ENCODE measurements at regions of chr13 and their contacts with region 1.

Region 1: DNA sequence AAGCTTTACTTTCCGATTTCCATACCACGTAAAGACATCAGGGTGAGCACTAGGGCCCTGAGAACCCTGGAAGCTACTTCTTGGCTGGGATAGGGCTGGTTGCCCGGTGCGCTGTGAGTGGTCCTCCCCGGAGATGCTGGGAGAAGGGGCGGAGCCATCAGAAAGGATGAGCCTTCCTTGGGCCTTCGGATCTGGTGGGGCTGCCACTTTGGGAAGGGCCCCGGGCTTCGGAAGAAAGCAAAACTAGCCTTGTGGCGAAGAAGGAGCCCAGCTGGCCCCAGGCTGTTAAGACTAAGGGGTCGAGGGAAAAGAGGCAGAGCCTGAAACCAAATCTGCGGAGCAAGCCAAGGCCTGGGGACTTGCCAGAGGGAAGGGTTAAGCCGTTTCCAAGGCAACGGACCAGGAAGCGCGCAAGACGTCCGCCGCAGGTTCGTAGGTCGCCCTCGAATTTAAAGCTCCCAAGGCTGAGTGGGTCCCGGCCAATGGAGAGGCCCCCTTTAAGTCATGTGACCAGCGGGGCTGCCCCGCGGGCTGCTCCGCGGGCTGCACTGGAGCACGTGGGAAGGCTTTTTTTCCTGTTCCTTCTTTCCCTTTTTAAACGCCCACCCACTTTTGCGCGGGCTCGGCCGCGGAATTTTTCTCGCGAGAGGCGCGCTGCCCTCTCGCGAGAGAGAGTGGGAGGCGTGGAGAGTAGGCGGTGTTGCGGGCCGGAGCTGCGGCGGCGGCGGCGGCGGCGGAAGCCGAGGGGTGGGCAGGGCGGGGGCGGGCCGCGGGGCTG is 426 bp upstream of the AKAP11 start:
- DNase-seq: peak; percentile 87 to 96 (median 93)
- ATAC-seq: peak; percentile 93
- H3K4me3 ChIP-seq: peak overlapping the region; percentile 84
- H3K4me3 Mint-ChIP-seq: peak overlapping the region in 9 of 10 donors; percentile 84 to 98 (median 97)
- H3K27ac ChIP-seq: peak overlapping the region; percentile 93
- H3K27ac Mint-ChIP-seq: peak overlapping the region; percentile 75 to 98 (median 96)
- H3K4me1 ChIP-seq: peaks cover 21 to 22% of the 10 kb centered on the region in 2 donors
- H3K4me1 Mint-ChIP-seq: peaks cover 16 to 55% (median 47%) of the 10 kb centered on the region in 7 donors
- H3K27me3 ChIP-seq: no peaks in the 10 kb centered on the region
- H3K27me3 Mint-ChIP-seq: peaks cover 0 to 5% (median 0%) of the 10 kb centered on the region in 5 donors

Region 2: GRCh38 chr13:41132512-41133152 is 1138.9 kb before region 1 on chr13 and contains the start of gene KBTBD6:
- CTCF ChIA-PET with region 1: no interaction called
- POLR2A ChIA-PET with region 1: no interaction called
- intact Hi-C with region 1: loop called (anchors 1 to 2 kb)
- DNase-seq: peak; percentile 76 to 93 (median 87)
- ATAC-seq: peak; percentile 98
- H3K4me3 ChIP-seq: peak within 1 kb of the TSS; percentile 77
- H3K4me3 Mint-ChIP-seq: peak within 1 kb of the TSS; percentile 94 to 99 (median 98)
- H3K27ac ChIP-seq: peak within 1 kb of the TSS; percentile 67
- H3K27ac Mint-ChIP-seq: peak within 1 kb of the TSS; percentile 91 to 97 (median 93)
- H3K4me1 ChIP-seq: peaks cover 15 to 24% of the 10 kb centered on the region in 2 donors
- H3K4me1 Mint-ChIP-seq: peaks cover 32 to 60% (median 54%) of the 10 kb centered on the region in 7 donors
- H3K27me3 ChIP-seq: no peaks in the 10 kb centered on the region
- H3K27me3 Mint-ChIP-seq: no peaks in the 10 kb centered on the region
- total RNA-seq, gene KBTBD6: 3.9 to 9.2 (median 7.7) TPM

Region 3: DNA sequence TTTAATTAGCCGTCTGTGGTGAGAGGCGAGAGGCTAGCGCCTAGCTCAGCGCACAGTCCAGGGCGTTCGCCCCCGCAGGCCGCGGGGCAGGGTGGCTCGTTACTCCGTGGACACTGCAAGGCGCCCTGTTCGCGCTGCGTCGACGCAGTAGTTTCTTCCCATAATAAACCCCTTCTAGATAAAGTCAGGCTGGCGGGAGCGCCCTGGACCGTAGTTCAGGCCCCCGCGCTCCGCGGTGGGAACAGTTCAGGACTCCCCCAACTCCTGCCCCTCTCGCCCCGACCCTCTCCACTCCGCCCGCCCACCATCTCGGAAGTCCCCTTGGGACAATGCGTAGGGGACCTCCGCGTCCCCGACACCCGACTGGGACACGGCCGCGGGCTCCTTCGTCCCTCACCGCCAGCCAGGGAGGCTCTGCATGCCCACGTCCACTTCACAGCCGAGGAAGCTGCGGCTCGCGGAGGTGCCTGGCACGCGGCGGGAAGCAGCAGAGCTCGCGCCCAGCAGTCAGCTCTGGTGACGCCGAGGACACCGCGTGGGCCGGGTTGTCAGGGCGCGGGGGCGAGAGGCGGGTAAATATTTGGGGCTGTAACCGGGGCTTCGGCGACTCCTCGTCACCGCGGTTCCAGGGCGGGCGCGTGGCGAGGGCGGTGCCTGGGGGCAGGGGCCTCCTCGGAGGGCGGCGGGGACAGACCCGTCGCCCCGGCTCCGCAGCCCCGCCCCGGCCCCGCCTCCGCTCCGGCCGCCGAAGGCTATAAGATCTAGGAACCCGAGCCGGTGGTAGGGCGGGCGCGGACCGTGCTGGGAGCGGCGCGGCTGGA is 814.5 kb before region 1 on chr13 and contains the start of gene RGCC:
- CTCF ChIA-PET with region 1: no interaction called
- POLR2A ChIA-PET with region 1: no interaction called
- intact Hi-C with region 1: loop called in 1 of 2 experiments (anchors 5 kb)
- DNase-seq: peak; percentile 89 to 98 (median 94)
- ATAC-seq: peak; percentile 90
- H3K4me3 ChIP-seq: peak within 1 kb of the TSS; percentile 84
- H3K4me3 Mint-ChIP-seq: peak within 1 kb of the TSS; percentile 91 to 98 (median 96)
- H3K27ac ChIP-seq: peak within 1 kb of the TSS; percentile 97
- H3K27ac Mint-ChIP-seq: peak within 1 kb of the TSS; percentile 93 to 99 (median 98)
- H3K4me1 ChIP-seq: peaks cover 22 to 37% of the 10 kb centered on the region in 2 donors
- H3K4me1 Mint-ChIP-seq: peaks cover 28 to 47% (median 38%) of the 10 kb centered on the region in 7 donors
- H3K27me3 ChIP-seq: no peaks in the 10 kb centered on the region
- H3K27me3 Mint-ChIP-seq: peaks cover 0 to 26% (median 0%) of the 10 kb centered on the region in 5 donors
- total RNA-seq, gene RGCC: 45.9 to 402 (median 197) TPM

Region 4: GRCh38 chr13:42039946-42040729 is 231.4 kb before region 1 on chr13:
- CTCF ChIA-PET with region 1: no interaction called
- POLR2A ChIA-PET with region 1: no interaction called
- intact Hi-C with region 1: loop called (anchors 2 to 5 kb)
- DNase-seq: peak; percentile 67 to 87 (median 79)
- ATAC-seq: peak; percentile 92
- H3K4me3 ChIP-seq: peak overlapping the region; percentile 70
- H3K4me3 Mint-ChIP-seq: peak overlapping the region; percentile 83 to 95 (median 90)
- H3K27ac ChIP-seq: peak overlapping the region; percentile 73
- H3K27ac Mint-ChIP-seq: peak overlapping the region; percentile 29 to 91 (median 84)
- H3K4me1 ChIP-seq: peaks cover 7 to 8% of the 10 kb centered on the region in 2 donors
- H3K4me1 Mint-ChIP-seq: peaks cover 7 to 22% (median 20%) of the 10 kb centered on the region in 7 donors
- H3K27me3 ChIP-seq: no peaks in the 10 kb centered on the region
- H3K27me3 Mint-ChIP-seq: peaks cover 0 to 58% (median 0%) of the 10 kb centered on the region in 5 donors

Region 5: DNA sequence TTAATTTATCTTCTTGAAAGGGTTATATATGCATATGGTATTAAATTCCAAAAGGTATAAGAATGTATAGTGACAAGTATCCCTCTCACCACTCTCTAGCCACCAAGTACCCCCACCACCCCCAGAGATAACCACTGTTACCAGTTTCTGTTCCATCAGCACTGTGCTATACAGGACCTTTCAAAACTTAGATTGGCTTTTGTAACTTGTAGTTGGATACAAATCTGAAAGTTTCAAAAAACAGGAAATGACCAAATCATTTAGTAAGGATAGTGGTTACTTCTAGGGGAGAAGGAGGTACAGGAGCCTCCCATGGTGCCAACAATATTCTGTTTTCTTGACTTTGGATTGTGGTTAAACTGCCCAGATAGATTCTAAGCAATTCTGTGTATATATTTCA is 57.1 kb after region 1 on chr13:
- CTCF ChIA-PET with region 1: no interaction called
- POLR2A ChIA-PET with region 1: no interaction called
- intact Hi-C with region 1: loop called in 1 of 2 experiments (anchors 2 kb)
- DNase-seq: peak in 1 of 9 donors; percentile 26
- ATAC-seq: no peak
- H3K4me3 ChIP-seq: no peak overlapping the region
- H3K4me3 Mint-ChIP-seq: peak overlapping the region in 9 of 10 donors; percentile 9 to 70 (median 49)
- H3K27ac ChIP-seq: no peak overlapping the region
- H3K27ac Mint-ChIP-seq: peak overlapping the region; percentile 55 to 88 (median 78)
- H3K4me1 ChIP-seq: peaks cover 9 to 11% of the 10 kb centered on the region in 2 donors
- H3K4me1 Mint-ChIP-seq: peaks cover 13 to 44% (median 24%) of the 10 kb centered on the region in 7 donors
- H3K27me3 ChIP-seq: no peaks in the 10 kb centered on the region
- H3K27me3 Mint-ChIP-seq: no peaks in the 10 kb centered on the region

Region 6: GRCh38 chr13:42458193-42458592 is 186.7 kb after region 1 on chr13:
- CTCF ChIA-PET with region 1: no interaction called
- POLR2A ChIA-PET with region 1: no interaction called
- intact Hi-C with region 1: no loop called
- DNase-seq: no peak
- ATAC-seq: no peak
- H3K4me3 ChIP-seq: no peak overlapping the region
- H3K4me3 Mint-ChIP-seq: no peak overlapping the region
- H3K27ac ChIP-seq: no peak overlapping the region
- H3K27ac Mint-ChIP-seq: no peak overlapping the region
- H3K4me1 ChIP-seq: no peaks in the 10 kb centered on the region
- H3K4me1 Mint-ChIP-seq: peaks cover 0 to 15% (median 0%) of the 10 kb centered on the region in 7 donors
- H3K27me3 ChIP-seq: no peaks in the 10 kb centered on the region
- H3K27me3 Mint-ChIP-seq: no peaks in the 10 kb centered on the region

Region 7: DNA sequence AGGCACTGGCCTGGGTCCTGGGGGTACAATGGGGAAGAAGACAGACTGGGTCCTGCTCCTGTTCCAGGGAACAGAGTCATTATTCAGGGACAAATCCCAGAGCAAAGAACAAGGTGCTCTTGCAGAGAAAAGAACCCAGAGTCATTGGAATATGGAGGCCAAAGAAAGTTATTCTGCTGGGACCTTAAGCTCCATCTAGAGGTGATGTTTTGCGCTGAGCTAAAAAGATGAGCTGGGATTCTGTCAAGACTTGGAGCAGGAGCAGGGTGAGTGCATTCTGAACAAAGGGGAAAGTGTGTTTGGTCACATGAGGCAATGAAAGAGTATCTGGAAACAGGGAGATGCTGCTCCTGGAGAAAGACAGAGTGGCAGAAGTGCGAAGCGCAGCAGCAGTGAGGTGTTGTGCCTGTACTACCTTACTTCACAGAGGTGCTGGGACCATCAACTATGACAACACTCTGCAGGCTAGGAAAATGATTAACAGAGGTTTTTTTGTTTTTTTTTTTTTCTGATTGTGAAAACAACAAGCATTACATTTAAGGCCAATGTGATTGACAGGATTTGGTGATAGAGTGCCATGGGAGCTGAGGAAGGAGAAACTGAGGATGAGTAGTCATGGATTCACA is 207.1 kb after region 1 on chr13:
- CTCF ChIA-PET with region 1: no interaction called
- POLR2A ChIA-PET with region 1: no interaction called
- intact Hi-C with region 1: loop called in 1 of 2 experiments (anchors 5 kb)
- DNase-seq: peak in 2 of 9 donors; percentile 7 to 20
- ATAC-seq: peak; percentile 32
- H3K4me3 ChIP-seq: no peak overlapping the region
- H3K4me3 Mint-ChIP-seq: no peak overlapping the region
- H3K27ac ChIP-seq: no peak overlapping the region
- H3K27ac Mint-ChIP-seq: peak overlapping the region in 1 of 9 donors; percentile 26
- H3K4me1 ChIP-seq: no peaks in the 10 kb centered on the region
- H3K4me1 Mint-ChIP-seq: peaks cover 0 to 16% (median 4%) of the 10 kb centered on the region in 7 donors
- H3K27me3 ChIP-seq: no peaks in the 10 kb centered on the region
- H3K27me3 Mint-ChIP-seq: no peaks in the 10 kb centered on the region

Measured in naive thymus-derived CD4-positive, alpha-beta T cell (primary cell).